Heart left ventricle (tissue), 16 donors: ENCODE measurements at regions of chr1 and their contacts with region 1.

Region 1: GRCh38 chr1:100459358-100460114 is 78.4 kb upstream of the GPR88 start:
- DNase-seq: peak; percentile 60 to 77 (median 66)
- ATAC-seq: peak; percentile 61 to 92 (median 88)
- H3K4me3 ChIP-seq: no peak overlapping the region
- H3K27ac ChIP-seq: peak overlapping the region in 2 of 12 donors; percentile 27 to 34
- H3K4me1 ChIP-seq: peaks cover 0 to 18% (median 6%) of the 10 kb centered on the region in 12 donors
- H3K27me3 ChIP-seq: no peaks in the 10 kb centered on the region
- CTCF ChIP-seq: peak; percentile 71 to 94 (median 84)
- POLR2A ChIP-seq: no peak

Region 2: GRCh38 chr1:99818063-99818699 is 641.4 kb before region 1 on chr1:
- intact Hi-C with region 1: loop called in 1 of 10 experiments (anchors 5 kb)
- DNase-seq: no peak
- ATAC-seq: peak; percentile 86 to 93 (median 90)
- H3K4me3 ChIP-seq: no peak overlapping the region
- H3K27ac ChIP-seq: peak overlapping the region in 8 of 12 donors; percentile 5 to 72 (median 34)
- H3K4me1 ChIP-seq: peaks cover 0 to 10% (median 0%) of the 10 kb centered on the region in 12 donors
- H3K27me3 ChIP-seq: no peaks in the 10 kb centered on the region
- CTCF ChIP-seq: no peak
- POLR2A ChIP-seq: no peak

Region 3: GRCh38 chr1:100265931-100266740 is 193.4 kb before region 1 on chr1 and contains the start of gene RTCA:
- intact Hi-C with region 1: loop called in 2 of 10 experiments (anchors 5 to 10 kb)
- DNase-seq: peak; percentile 96 to 99 (median 98)
- ATAC-seq: peak; percentile 98 to 100 (median 99)
- H3K4me3 ChIP-seq: peak within 1 kb of the TSS; percentile 62 to 99 (median 82)
- H3K27ac ChIP-seq: peak within 1 kb of the TSS; percentile 39 to 92 (median 82)
- H3K4me1 ChIP-seq: peaks cover 0 to 35% (median 23%) of the 10 kb centered on the region in 12 donors
- H3K27me3 ChIP-seq: no peaks in the 10 kb centered on the region
- CTCF ChIP-seq: peak in 1 of 12 donors; percentile 27
- POLR2A ChIP-seq: peak; percentile 14 to 93
- total RNA-seq, gene RTCA: 31.4 to 54.6 (median 36.3) TPM

Region 4: GRCh38 chr1:100292711-100293110 is 166.8 kb before region 1 on chr1:
- intact Hi-C with region 1: loop called in 5 of 10 experiments (anchors 5 to 10 kb)
- DNase-seq: no peak
- ATAC-seq: peak in 3 of 4 donors; percentile 49 to 54 (median 49)
- H3K4me3 ChIP-seq: no peak overlapping the region
- H3K27ac ChIP-seq: peak overlapping the region in 6 of 12 donors; percentile 18 to 55 (median 36)
- H3K4me1 ChIP-seq: peaks cover 0 to 12% (median 0%) of the 10 kb centered on the region in 12 donors
- H3K27me3 ChIP-seq: no peaks in the 10 kb centered on the region
- CTCF ChIP-seq: no peak
- POLR2A ChIP-seq: no peak

Region 5: GRCh38 chr1:100400404-100400803 is 59.1 kb before region 1 on chr1:
- intact Hi-C with region 1: no loop called
- DNase-seq: peak in 4 of 5 donors; percentile 38 to 58 (median 54)
- ATAC-seq: peak in 3 of 4 donors; percentile 70 to 88 (median 85)
- H3K4me3 ChIP-seq: peak overlapping the region in 2 of 12 donors; percentile 4 to 10
- H3K27ac ChIP-seq: peak overlapping the region; percentile 0 to 86 (median 54)
- H3K4me1 ChIP-seq: peaks cover 0 to 65% (median 7%) of the 10 kb centered on the region in 12 donors
- H3K27me3 ChIP-seq: no peaks in the 10 kb centered on the region
- CTCF ChIP-seq: no peak
- POLR2A ChIP-seq: peak in 1 of 2 donors; percentile 19

Region 6: GRCh38 chr1:100606438-100606837 is 146.9 kb after region 1 on chr1:
- intact Hi-C with region 1: loop called in 5 of 10 experiments (anchors 5 to 10 kb)
- DNase-seq: peak in 3 of 5 donors; percentile 28 to 39 (median 30)
- ATAC-seq: peak in 3 of 4 donors; percentile 64 to 83 (median 81)
- H3K4me3 ChIP-seq: no peak overlapping the region
- H3K27ac ChIP-seq: no peak overlapping the region
- H3K4me1 ChIP-seq: no peaks in the 10 kb centered on the region
- H3K27me3 ChIP-seq: no peaks in the 10 kb centered on the region
- CTCF ChIP-seq: peak; percentile 49 to 82 (median 67)
- POLR2A ChIP-seq: no peak

Region 7: GRCh38 chr1:100866041-100866900 is 406.7 kb after region 1 on chr1:
- intact Hi-C with region 1: loop called (anchors 1 to 5 kb)
- DNase-seq: no peak
- ATAC-seq: peak in 3 of 4 donors; percentile 55 to 69 (median 60)
- H3K4me3 ChIP-seq: peak overlapping the region in 4 of 12 donors; percentile 8 to 27 (median 11)
- H3K27ac ChIP-seq: no peak overlapping the region
- H3K4me1 ChIP-seq: peaks cover 0 to 10% (median 2%) of the 10 kb centered on the region in 12 donors
- H3K27me3 ChIP-seq: no peaks in the 10 kb centered on the region
- CTCF ChIP-seq: peak; percentile 46 to 78 (median 65)
- POLR2A ChIP-seq: no peak

Region 8: GRCh38 chr1:101314244-101314643 is 854.7 kb after region 1 on chr1:
- intact Hi-C with region 1: no loop called
- DNase-seq: no peak
- ATAC-seq: no peak
- H3K4me3 ChIP-seq: no peak overlapping the region
- H3K27ac ChIP-seq: no peak overlapping the region
- H3K4me1 ChIP-seq: peaks cover 0 to 20% (median 0%) of the 10 kb centered on the region in 12 donors
- H3K27me3 ChIP-seq: peaks cover 0 to 24% (median 0%) of the 10 kb centered on the region in 9 donors
- CTCF ChIP-seq: no peak
- POLR2A ChIP-seq: no peak